ENCODE measurements at regions of chr11 and their contacts with region 1.

Region 1: GRCh38 chr11:121451986-121452608 is at the start of gene SORL1:
- DNase-seq: peak; percentile 67 to 86 (median 75)
- ATAC-seq: peak; percentile 82 to 95 (median 90)
- H3K4me3 ChIP-seq: peak within 1 kb of the TSS; percentile 44 to 98 (median 68)
- H3K27ac ChIP-seq: peak within 1 kb of the TSS in 3 of 12 donors; percentile 34 to 76 (median 58)
- H3K4me1 ChIP-seq: peaks cover 0 to 77% (median 3%) of the 10 kb centered on the region in 12 donors
- H3K27me3 ChIP-seq: peaks cover 0 to 6% (median 0%) of the 10 kb centered on the region in 9 donors
- CTCF ChIP-seq: peak; percentile 6 to 64 (median 43)
- POLR2A ChIP-seq: no peak
- total RNA-seq, gene SORL1: 2.9 to 20.5 (median 5.8) TPM

Region 2: GRCh38 chr11:121318848-121319834 is 133.0 kb before region 1 on chr11:
- intact Hi-C with region 1: loop called in 7 of 10 experiments (anchors 5 to 10 kb)
- DNase-seq: peak in 1 of 5 donors; percentile 10
- ATAC-seq: peak in 3 of 4 donors; percentile 66 to 78 (median 74)
- H3K4me3 ChIP-seq: no peak overlapping the region
- H3K27ac ChIP-seq: no peak overlapping the region
- H3K4me1 ChIP-seq: peaks cover 0 to 5% (median 0%) of the 10 kb centered on the region in 12 donors
- H3K27me3 ChIP-seq: peaks cover 0 to 8% (median 0%) of the 10 kb centered on the region in 9 donors
- CTCF ChIP-seq: peak; percentile 45 to 75 (median 66)
- POLR2A ChIP-seq: no peak

Region 3: DNA sequence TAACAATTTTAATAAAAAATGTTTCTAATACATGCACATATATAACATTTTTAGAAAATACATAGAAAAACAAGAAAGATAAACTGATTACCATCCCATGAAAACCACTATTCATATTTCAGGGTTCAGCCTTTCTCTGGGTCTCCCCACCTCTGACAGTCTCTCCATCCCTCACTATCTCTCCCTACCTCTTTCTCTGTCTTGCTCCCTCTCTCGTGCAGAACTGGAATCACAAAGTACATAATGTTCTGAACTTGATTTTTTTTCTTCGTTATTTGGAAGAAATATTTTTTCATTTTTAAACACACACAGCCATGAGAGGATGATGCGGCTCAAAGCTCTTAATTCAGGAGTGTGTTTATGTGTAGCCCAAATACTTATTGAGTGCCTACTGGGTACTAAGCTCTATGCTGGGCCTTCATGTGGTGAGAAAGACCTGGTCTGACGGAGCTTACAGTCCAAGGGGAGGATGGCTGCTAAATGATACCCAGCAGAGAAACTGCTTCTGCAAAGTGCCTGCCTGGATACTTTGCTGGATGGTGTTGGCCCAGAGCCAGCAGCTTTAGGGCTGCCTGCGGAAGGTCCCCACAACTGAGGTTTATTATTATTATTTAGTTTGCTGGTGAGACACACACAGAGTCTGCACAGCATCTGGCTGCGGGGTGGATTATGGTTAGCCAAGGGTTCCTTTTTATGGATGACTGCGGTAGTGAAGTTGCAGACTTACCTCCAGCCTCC is 117.0 kb before region 1 on chr11:
- intact Hi-C with region 1: loop called in 1 of 10 experiments (anchors 10 kb)
- DNase-seq: no peak
- ATAC-seq: no peak
- H3K4me3 ChIP-seq: no peak overlapping the region
- H3K27ac ChIP-seq: no peak overlapping the region
- H3K4me1 ChIP-seq: peaks cover 0 to 35% (median 5%) of the 10 kb centered on the region in 12 donors
- H3K27me3 ChIP-seq: peaks cover 0 to 5% (median 0%) of the 10 kb centered on the region in 9 donors
- CTCF ChIP-seq: peak in 2 of 12 donors; percentile 7 to 17
- POLR2A ChIP-seq: no peak

Region 4: DNA sequence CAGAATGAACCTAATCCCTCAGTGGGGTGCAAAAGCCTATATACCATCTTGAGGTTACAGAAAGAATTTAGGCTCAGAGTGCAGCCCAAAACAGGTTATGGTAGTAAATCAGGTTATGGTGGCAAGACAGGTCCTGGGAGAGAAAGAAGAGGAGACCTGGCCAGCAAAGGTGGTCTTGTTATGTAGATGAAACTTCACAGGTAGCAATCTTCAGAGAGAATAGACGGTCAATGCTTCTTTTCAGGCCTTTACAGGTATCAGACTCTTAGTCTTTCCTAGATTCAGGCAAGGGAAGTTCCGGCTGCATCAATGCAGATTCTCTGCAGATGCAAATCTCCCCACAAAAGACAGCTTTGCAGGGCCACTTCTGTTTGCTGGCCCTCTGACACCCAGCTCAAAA is 45.8 kb before region 1 on chr11:
- intact Hi-C with region 1: no loop called
- DNase-seq: no peak
- ATAC-seq: no peak
- H3K4me3 ChIP-seq: no peak overlapping the region
- H3K27ac ChIP-seq: peak overlapping the region in 1 of 12 donors; percentile 43
- H3K4me1 ChIP-seq: peaks cover 0 to 4% (median 0%) of the 10 kb centered on the region in 12 donors
- H3K27me3 ChIP-seq: no peaks in the 10 kb centered on the region
- CTCF ChIP-seq: no peak
- POLR2A ChIP-seq: no peak

Region 5: GRCh38 chr11:121534131-121535093 is 82.3 kb after region 1 on chr11:
- intact Hi-C with region 1: loop called in 2 of 10 experiments (anchors 5 to 10 kb)
- DNase-seq: no peak
- ATAC-seq: peak in 3 of 4 donors; percentile 68 to 80 (median 78)
- H3K4me3 ChIP-seq: no peak overlapping the region
- H3K27ac ChIP-seq: no peak overlapping the region
- H3K4me1 ChIP-seq: peaks cover 0 to 3% (median 0%) of the 10 kb centered on the region in 12 donors
- H3K27me3 ChIP-seq: no peaks in the 10 kb centered on the region
- CTCF ChIP-seq: peak in 11 of 12 donors; percentile 12 to 61 (median 47)
- POLR2A ChIP-seq: no peak

Region 6: DNA sequence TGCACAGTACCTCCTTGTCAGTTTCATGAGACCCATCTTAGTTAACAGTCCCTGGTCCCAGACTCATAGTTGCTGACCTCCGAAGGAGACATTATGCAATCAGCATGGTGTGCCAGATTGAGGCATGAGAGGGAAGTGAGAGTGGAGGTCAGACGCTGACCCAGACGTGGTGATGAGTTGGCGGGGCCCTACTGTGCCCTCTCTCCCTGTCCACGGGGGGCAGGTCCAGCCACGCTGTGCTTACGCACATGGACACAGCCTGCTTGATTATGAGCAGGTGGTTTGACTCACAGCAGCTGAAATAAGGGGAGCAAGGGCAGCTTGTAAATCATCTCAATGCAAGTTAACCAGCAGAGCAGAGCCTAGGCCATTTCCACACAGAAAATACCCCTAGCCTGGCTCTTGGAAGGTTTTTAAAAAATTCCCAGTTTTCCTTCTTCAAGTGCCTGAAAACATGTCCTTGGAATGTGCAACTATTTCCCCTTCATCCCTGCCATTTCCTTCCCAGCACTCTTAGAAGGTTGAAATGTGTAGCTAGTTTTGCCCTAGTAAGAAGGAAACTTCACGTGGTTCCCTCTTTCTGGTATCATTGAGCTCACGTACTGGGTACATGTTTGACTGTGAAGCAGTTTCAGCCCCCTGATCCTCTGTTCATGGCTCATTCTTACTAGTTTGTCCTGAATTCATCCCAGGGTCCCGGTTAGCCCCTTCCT is 123.3 kb after region 1 on chr11:
- intact Hi-C with region 1: loop called in 1 of 10 experiments (anchors 5 kb)
- DNase-seq: peak; percentile 50 to 89 (median 82)
- ATAC-seq: peak; percentile 73 to 98 (median 94)
- H3K4me3 ChIP-seq: no peak overlapping the region
- H3K27ac ChIP-seq: peak overlapping the region in 2 of 12 donors; percentile 15 to 55
- H3K4me1 ChIP-seq: peaks cover 0 to 50% (median 0%) of the 10 kb centered on the region in 12 donors
- H3K27me3 ChIP-seq: no peaks in the 10 kb centered on the region
- CTCF ChIP-seq: no peak
- POLR2A ChIP-seq: no peak

Region 7: GRCh38 chr11:121591405-121592033 is 139.4 kb after region 1 on chr11:
- intact Hi-C with region 1: loop called in 4 of 10 experiments (anchors 5 to 10 kb)
- DNase-seq: peak in 4 of 5 donors; percentile 43 to 67 (median 57)
- ATAC-seq: peak; percentile 45 to 82 (median 78)
- H3K4me3 ChIP-seq: no peak overlapping the region
- H3K27ac ChIP-seq: no peak overlapping the region
- H3K4me1 ChIP-seq: peaks cover 0 to 19% (median 0%) of the 10 kb centered on the region in 12 donors
- H3K27me3 ChIP-seq: no peaks in the 10 kb centered on the region
- CTCF ChIP-seq: peak; percentile 78 to 92 (median 87)
- POLR2A ChIP-seq: no peak

Measured in heart left ventricle (tissue), 16 donors.